ENCODE measurements at regions of chr16 and their contacts with region 1.

Region 1: GRCh38 chr16:3389663-3390338 is 11.0 kb downstream of the ZSCAN32 start:
- DNase-seq: no peak
- ATAC-seq: no peak
- H3K4me3 ChIP-seq: no peak overlapping the region
- H3K4me1 ChIP-seq: no peaks in the 10 kb centered on the region
- CTCF ChIP-seq: no peak

Region 2: DNA sequence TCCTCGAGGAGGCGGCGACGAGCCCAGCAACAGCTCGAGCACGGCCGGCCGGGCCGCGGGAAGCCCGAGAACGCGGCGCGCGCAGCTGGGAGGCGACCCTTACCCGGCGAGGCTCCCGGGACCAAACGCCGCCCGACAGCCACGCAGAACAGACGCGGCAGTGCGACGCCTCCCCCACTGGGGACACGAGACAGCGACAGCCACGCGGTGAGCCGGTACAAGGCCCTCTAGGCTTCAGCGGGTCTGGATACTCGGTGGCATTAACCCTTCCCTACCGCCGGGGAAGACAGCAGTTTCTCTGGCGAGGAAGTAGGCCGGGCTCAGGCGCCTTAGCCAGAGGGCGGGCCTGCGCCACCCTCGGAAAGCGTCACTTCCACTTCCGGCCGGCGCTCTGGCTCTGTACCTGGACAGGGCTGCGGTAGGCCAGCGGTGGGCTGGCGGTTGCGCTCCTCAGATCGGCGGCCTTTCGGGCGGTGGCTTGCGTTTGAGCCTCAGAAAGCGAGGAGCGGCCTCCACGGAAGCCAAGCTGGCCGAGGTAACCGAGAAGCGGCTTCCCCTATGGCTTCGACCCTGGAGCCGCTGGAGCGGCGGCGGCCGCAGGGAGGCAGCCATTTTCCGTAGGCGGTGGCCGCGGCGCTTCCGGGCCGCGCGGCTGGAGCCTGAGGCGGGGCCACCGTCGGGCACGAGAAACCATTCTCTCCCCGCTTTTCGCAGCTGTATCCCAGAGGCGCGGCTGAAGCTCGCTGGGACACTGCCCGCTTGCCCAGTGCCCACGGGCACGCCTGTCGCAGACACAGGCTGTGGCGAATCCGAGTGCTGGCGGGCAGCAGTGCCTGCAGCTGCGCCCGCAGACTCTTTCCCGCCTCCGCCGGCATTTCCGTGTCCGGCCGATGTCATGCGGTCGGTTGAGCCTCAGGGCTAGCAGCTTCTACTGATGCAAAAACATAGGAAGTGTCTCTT is 84.4 kb before region 1 on chr16 and contains the starts of genes TIGD7 and ZNF75A:
- intact Hi-C with region 1: loop called (anchors 10 kb)
- DNase-seq: peak; percentile 88 to 90 (median 88)
- ATAC-seq: peak; percentile 99
- H3K4me3 ChIP-seq: peak within 1 kb of the TSS; percentile 77
- H3K4me1 ChIP-seq: peaks cover 4% of the 10 kb centered on the region
- CTCF ChIP-seq: peak; percentile 23
- total RNA-seq, gene TIGD7: 1.6 to 7.5 (median 3.3) TPM
- total RNA-seq, gene ZNF75A: 19.0 to 33.1 (median 30.8) TPM

Region 3: DNA sequence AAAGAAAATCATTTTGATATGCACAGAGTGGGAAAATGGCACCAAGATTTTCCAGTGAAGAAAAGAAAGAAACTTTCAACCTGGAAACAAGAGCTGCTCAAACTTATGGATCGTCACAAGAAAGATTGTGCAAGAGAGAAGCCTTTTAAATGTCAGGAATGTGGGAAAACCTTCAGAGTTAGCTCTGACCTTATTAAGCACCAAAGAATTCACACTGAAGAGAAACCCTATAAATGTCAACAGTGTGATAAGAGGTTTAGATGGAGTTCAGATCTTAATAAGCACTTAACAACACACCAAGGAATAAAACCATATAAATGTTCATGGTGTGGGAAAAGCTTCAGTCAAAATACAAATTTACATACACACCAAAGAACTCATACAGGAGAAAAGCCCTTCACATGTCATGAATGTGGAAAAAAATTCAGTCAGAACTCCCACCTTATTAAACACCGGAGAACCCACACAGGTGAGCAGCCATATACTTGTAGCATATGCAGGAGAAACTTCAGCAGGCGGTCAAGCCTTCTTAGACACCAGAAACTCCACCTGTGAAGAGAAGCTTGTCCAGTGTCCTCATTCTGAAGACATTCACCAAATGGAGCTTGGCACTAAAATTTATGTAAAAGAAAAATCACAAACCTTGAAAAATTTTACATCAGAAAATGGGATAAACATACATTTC is 72.3 kb before region 1 on chr16:
- intact Hi-C with region 1: loop called in 1 of 2 experiments (anchors 10 kb)
- DNase-seq: no peak
- ATAC-seq: no peak
- H3K4me3 ChIP-seq: no peak overlapping the region
- H3K4me1 ChIP-seq: no peaks in the 10 kb centered on the region
- CTCF ChIP-seq: no peak